Activated T-helper 2 cell treated with anti-CD3 and anti-CD28 coated beads, Interferon-gamma antibody, Interleukin-2, Interleukin-4, amounts not matched to agents 10 μg/mL and 5 μg/mL and 100 μg/mL, durations not matched to agents 14 hours and 24 hours and 36 hours (primary cell): ENCODE measurements at regions of chr11 and their contacts with region 1.

Region 1: GRCh38 chr11:59171508-59172322 is at the start of gene DTX4:
- DNase-seq: peak; percentile 82
- H3K4me3 Mint-ChIP-seq: peak within 1 kb of the TSS; percentile 82
- H3K27ac Mint-ChIP-seq: no peak within 1 kb of the TSS
- H3K4me1 Mint-ChIP-seq: peaks cover 11% of the 10 kb centered on the region
- H3K27me3 Mint-ChIP-seq: peaks cover 47% of the 10 kb centered on the region
- total RNA-seq, gene DTX4: 0.09 and 0.68 TPM in 2 replicates

Region 2: DNA sequence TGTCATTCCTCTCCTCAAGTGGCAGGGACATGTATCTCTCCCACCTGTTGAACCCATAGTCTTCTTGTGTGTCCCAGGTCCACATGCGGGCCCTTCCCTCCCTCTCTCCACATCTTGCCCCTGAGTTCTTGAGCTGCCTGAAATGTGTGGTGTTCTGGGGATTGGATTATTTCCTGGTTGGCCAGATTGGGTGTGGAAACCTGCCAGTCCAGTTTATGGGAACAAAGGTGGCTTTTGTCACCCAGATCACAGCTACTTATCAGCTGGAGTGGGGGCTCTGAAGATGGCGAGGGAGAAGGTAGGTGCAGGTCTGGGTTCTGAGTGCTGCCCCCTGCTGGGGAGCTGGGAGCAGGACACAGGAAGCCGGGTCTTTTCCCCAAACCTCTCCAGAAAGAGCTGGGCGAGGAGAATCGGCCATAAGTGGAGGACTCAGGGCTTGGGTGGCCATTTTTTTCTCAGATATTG is 14.4 kb after region 1 on chr11:
- intact Hi-C with region 1: loop called (anchors 1 kb)
- DNase-seq: peak; percentile 32
- H3K4me3 Mint-ChIP-seq: no peak overlapping the region
- H3K27ac Mint-ChIP-seq: no peak overlapping the region
- H3K4me1 Mint-ChIP-seq: peaks cover 2% of the 10 kb centered on the region
- H3K27me3 Mint-ChIP-seq: peaks cover 9% of the 10 kb centered on the region

Region 3: GRCh38 chr11:59207988-59208451 is 36.3 kb after region 1 on chr11:
- intact Hi-C with region 1: loop called (anchors 1 kb)
- DNase-seq: peak; percentile 14
- H3K4me3 Mint-ChIP-seq: no peak overlapping the region
- H3K27ac Mint-ChIP-seq: no peak overlapping the region
- H3K4me1 Mint-ChIP-seq: peaks cover 24% of the 10 kb centered on the region
- H3K27me3 Mint-ChIP-seq: peaks cover 44% of the 10 kb centered on the region

Region 4: GRCh38 chr11:59283825-59284772 is 112.4 kb after region 1 on chr11:
- intact Hi-C with region 1: loop called (anchors 1 kb)
- DNase-seq: peak; percentile 31
- H3K4me3 Mint-ChIP-seq: peak overlapping the region; percentile 46
- H3K27ac Mint-ChIP-seq: no peak overlapping the region
- H3K4me1 Mint-ChIP-seq: peaks cover 10% of the 10 kb centered on the region
- H3K27me3 Mint-ChIP-seq: peaks cover 5% of the 10 kb centered on the region

Region 5: DNA sequence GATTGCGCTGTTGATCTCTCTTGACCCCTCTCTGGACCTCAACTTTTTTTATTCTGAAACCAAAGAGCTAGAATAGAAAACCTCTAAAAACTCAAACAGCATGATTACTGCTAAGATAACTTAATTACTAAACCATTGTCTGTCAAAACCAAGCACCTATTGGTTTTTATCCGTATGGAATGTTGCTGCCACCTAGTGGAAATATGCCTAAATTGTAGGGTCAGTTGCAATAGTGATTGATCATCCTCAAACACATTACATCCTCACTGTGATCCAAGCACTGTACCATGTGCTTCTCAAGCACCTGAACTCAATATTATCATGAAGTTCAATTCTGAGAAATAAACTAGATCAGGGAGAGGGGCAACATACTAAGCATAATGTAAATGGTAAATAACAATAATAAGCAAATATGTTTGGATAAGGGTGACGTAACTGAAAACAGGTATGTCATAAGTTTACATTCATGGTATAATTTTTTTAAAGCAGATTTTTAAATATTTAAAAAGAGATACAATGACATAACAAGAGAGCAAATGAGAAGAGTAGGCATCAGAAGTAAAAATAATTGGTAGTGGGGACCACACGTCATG is 258.3 kb after region 1 on chr11:
- intact Hi-C with region 1: loop called (anchors 1 kb)
- DNase-seq: peak; percentile 12
- H3K4me3 Mint-ChIP-seq: no peak overlapping the region
- H3K27ac Mint-ChIP-seq: no peak overlapping the region
- H3K4me1 Mint-ChIP-seq: no peaks in the 10 kb centered on the region
- H3K27me3 Mint-ChIP-seq: peaks cover 8% of the 10 kb centered on the region